ENCODE measurements at regions of chr17 and their contacts with region 1.

Region 1: GRCh38 chr17:7239091-7240027 is at the start of gene PHF23:
- DNase-seq: peak; percentile 100
- ATAC-seq: peak; percentile 85
- total RNA-seq, gene PHF23: 23.3 TPM

Region 2: DNA sequence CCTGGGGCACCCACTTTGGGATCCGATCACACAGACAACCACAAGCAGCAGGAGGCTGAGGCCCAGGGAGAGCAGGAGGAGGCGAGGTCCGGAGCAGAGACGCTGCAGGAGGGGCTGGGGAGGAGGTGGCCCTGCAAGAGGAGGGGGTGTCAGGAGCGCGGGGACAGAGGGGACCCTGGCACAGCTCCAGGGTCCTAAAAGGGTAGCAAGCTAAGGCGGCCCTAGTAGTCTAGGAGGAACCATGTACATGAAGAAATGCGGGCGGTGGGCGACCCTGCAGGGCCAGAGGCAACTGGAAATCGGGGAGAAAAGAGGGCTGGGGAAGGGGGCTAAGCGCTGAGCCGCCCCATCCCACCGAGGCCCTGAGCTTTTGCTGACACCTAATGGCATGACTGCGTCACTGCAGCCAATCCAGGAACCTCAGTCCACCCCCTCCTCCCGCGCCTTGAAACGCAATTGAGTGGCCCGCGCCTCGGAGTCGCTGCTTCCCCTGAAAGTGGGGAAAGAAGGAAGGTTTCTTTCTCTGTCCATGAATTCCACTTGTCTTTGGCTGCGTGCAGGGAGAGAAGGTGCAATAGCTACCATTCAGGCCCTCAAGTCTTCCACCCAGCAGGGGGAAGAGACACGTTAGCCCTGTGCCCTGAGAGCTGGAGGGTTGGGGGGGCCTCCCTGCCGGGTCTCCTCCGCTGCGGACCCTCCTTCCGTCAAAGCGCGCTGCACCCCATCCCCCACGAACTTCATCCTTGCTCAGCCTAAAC is 62.0 kb before region 1 on chr17:
- intact Hi-C with region 1: no loop called
- DNase-seq: peak; percentile 76
- ATAC-seq: peak; percentile 74

Region 3: DNA sequence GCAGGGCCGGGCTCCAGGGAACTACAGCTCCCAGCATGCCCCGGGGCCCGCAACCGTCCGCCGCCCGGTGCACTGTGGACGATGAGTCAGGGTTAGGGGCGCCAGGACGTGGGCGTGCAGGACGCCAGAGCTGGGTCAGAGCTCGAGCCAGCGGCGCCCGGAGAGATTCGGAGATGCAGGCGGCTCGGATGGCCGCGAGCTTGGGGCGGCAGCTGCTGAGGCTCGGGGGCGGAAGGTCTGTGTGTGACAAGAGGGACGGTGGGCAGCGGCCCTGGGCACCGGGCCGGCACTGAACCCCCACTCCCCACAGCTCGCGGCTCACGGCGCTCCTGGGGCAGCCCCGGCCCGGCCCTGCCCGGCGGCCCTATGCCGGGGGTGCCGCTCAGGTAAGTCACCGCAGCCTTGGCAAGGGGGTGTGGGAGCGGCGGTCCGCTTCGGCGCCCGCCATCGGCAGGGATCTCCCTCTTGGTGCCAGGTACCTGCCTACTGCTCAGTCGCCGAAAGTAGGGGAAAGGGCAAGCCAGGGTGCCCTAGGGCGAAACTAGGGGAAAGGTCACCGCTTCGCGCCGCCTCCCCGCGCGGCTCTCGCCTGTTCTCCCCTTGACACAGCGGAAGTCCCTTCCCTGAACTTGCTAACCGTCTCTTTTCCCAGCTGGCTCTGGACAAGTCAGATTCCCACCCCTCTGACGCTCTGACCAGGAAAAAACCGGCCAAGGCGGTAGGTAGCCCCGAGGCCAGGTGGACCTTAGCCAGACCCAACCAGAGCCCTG is 19.4 kb before region 1 on chr17 and contains the starts of genes ACADVL and DLG4:
- intact Hi-C with region 1: loop called (anchors 1 kb)
- DNase-seq: peak; percentile 97
- ATAC-seq: peak; percentile 88
- total RNA-seq, gene ACADVL: 2,192 TPM
- total RNA-seq, gene DLG4: 20.6 TPM

Region 4: DNA sequence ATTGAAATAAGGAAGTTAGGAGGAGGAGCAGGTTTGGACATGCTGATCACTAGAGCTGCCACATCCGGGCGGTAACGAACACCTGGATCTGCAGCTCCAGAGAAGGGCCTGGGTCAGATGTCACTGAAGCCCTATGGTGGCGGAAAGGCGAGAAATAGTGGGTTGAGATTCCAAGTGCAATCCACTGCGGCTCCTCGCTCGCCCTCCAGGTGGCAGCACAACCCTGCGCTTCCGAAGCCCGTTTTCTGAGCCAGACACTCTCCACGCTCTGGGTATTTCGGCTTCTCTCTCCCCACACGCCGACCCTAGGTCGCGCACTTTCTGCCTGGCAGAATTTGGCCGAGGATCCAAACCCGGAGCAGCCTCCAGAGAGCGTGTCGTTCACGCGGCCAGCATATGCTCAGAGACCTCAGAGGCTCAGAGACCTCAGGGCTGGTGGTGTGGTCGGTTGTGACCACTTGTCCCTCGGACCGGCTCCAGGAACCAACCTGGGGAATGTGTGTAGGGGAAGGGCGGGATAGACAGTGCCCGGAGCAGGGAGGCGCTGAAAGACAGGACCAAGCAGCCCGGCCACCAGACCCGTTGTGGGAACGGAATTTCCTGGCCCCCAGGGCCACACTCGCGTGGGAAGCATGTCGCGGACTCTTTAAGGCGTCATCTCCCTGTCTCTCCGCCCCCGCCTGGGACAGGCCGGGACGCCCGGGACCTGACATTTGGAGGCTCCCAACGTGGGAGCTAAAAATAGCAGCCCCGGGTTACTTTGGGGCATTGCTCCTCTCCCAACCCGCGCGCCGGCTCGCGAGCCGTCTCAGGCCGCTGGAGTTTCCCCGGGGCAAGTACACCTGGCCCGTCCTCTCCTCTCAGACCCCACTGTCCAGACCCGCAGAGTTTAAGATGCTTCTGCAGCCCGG is 41.4 kb after region 1 on chr17:
- intact Hi-C with region 1: loop called (anchors 2 kb)
- DNase-seq: peak; percentile 87
- ATAC-seq: peak; percentile 68

Region 5: DNA sequence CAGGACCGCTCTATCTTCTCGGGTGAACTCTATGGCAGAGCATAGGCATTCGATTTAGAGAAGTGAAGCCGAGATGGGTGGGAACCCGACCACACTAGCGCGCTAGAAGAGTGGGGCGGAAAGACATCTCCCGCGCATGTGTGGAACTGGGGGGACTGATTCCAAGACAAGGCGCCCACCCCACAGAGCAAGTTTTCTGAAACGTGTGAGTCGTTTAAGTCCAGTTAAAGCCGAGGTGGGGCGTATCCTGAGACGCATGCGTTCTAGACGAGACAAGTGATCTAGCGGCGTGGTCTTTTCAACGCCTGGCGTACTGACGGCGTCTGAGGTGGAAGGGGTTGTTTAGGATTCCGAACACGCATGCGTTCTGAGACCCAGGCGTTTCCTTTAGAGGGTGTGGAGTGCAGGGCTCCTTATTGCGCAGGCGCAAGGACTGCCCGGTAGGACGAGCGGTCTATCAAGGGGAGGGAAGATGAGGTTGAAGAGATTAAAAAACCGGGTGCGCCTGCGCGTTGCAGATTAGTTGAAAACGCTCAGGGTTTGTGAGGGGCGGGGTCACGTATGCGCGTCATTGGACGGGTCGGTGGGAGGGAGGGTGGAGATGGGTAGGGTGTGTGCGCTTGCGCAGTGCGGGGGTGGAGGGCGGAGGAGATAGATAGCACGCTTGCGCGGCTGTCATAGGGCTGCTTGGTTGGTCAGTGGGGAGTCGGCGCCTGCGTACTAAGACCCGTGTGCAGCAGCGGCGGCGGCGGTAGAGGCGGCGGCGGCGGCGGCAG is 67.7 kb after region 1 on chr17 and contains the start of gene EIF5A:
- intact Hi-C with region 1: loop called (anchors 5 kb)
- DNase-seq: peak; percentile 100
- ATAC-seq: peak; percentile 96
- total RNA-seq, gene EIF5A: 326 TPM